Activated CD4-positive, alpha-beta T cell treated with anti-CD3 and anti-CD28 coated beads, Interleukin-2, amount 10 ng/mL, durations not matched to agents 24 days and 14 days (primary cell): ENCODE measurements at regions of chr10 and their contacts with region 1.

Region 1: GRCh38 chr10:7417103-7417623 is 6.3 kb upstream of the SFMBT2 start:
- DNase-seq: peak; percentile 64
- H3K4me3 Mint-ChIP-seq: no peak overlapping the region
- H3K27ac Mint-ChIP-seq: no peak overlapping the region
- H3K4me1 Mint-ChIP-seq: peaks cover 27% of the 10 kb centered on the region
- H3K27me3 Mint-ChIP-seq: peaks cover 30% of the 10 kb centered on the region

Region 2: GRCh38 chr10:6843481-6843881 is 573.7 kb before region 1 on chr10:
- intact Hi-C with region 1: loop called (anchors 5 kb)
- DNase-seq: no peak
- H3K4me3 Mint-ChIP-seq: no peak overlapping the region
- H3K27ac Mint-ChIP-seq: no peak overlapping the region
- H3K4me1 Mint-ChIP-seq: peaks cover 4% of the 10 kb centered on the region
- H3K27me3 Mint-ChIP-seq: peaks cover 35% of the 10 kb centered on the region

Region 3: GRCh38 chr10:6920072-6921019 is 496.8 kb before region 1 on chr10:
- intact Hi-C with region 1: loop called (anchors 1 kb)
- DNase-seq: peak; percentile 93
- H3K4me3 Mint-ChIP-seq: no peak overlapping the region
- H3K27ac Mint-ChIP-seq: no peak overlapping the region
- H3K4me1 Mint-ChIP-seq: peaks cover 22% of the 10 kb centered on the region
- H3K27me3 Mint-ChIP-seq: peaks cover 6% of the 10 kb centered on the region

Region 4: GRCh38 chr10:7121154-7121810 is 295.9 kb before region 1 on chr10:
- intact Hi-C with region 1: loop called (anchors 1 kb)
- DNase-seq: peak; percentile 90
- H3K4me3 Mint-ChIP-seq: no peak overlapping the region
- H3K27ac Mint-ChIP-seq: no peak overlapping the region
- H3K4me1 Mint-ChIP-seq: peaks cover 4% of the 10 kb centered on the region
- H3K27me3 Mint-ChIP-seq: peaks cover 44% of the 10 kb centered on the region